Ascending aorta (tissue), 2 donors: ENCODE measurements at regions of chr7 and their contacts with region 1.

Region 1: GRCh38 chr7:46257766-46258448 is 336.8 kb upstream of the IGFBP3 start:
- DNase-seq: no peak
- H3K4me3 ChIP-seq: no peak overlapping the region
- H3K27ac ChIP-seq: no peak overlapping the region
- H3K4me1 ChIP-seq: no peaks in the 10 kb centered on the region
- H3K27me3 ChIP-seq: no peaks in the 10 kb centered on the region
- CTCF ChIP-seq: no peak

Region 2: DNA sequence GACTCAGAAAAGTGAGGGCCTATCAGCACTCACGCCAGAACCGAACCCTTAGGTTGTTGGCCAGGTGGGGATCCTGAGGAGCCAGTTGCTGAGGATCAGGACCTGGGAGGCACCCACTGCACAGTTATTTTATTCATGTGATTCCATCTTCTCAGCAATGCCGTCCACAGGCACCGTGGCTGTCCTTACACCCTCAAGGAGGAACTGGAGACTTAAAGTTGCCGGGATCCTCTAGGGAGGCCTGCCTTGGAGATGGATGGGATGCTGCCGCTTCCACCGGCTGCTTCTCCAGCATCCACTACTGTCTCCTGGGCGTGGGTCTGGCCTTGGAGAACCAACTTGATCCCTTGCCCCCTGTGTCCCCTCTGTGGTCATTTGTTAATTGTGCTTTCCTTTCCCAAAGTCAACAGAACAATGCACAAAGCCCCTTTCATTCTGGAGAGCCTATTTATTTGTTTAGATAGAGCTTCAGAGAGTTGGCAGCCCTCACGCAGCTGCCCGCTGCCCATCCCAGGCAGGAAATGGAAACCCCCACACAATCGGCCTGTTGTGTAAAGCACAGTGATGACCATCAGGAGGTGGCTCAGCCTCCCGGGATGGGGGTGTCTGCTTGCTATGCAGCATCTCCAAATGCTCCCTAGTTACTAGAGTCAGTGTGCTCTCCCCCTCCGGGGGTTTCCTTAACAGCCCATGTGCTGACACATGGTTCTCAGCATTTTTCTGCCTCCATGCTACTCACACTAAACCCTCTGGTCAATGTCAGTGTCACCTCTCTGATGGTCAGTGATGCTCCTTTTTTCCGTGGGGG is 284.0 kb before region 1 on chr7:
- intact Hi-C with region 1: no loop called
- DNase-seq: no peak
- H3K4me3 ChIP-seq: no peak overlapping the region
- H3K27ac ChIP-seq: peak overlapping the region in 1 of 2 donors; percentile 7
- H3K4me1 ChIP-seq: peaks cover 6 to 25% of the 10 kb centered on the region in 2 donors
- H3K27me3 ChIP-seq: no peaks in the 10 kb centered on the region
- CTCF ChIP-seq: no peak

Region 3: GRCh38 chr7:46178661-46179060 is 79.2 kb before region 1 on chr7:
- intact Hi-C with region 1: no loop called
- DNase-seq: no peak
- H3K4me3 ChIP-seq: no peak overlapping the region
- H3K27ac ChIP-seq: no peak overlapping the region
- H3K4me1 ChIP-seq: no peaks in the 10 kb centered on the region
- H3K27me3 ChIP-seq: no peaks in the 10 kb centered on the region
- CTCF ChIP-seq: no peak

Region 4: DNA sequence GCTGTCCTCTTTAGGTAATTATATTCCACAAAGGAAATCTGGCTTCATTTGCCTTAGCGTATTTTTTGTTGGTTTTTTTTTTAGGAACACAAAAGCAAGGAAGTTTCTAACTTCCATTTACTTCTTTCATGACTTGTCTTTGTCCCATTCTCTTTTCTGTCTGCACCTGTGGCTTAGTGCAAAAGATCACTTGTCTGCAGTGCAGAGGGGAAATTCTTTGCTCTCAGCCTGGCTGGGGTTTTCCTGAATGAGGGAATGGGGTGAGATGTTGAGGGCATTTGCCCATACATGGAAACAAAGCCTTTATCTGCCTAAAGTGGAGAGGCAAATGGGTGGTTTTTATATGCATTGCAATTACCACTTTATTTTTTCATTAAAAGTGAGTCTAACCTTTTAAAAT is 24.2 kb after region 1 on chr7:
- intact Hi-C with region 1: loop called (anchors 1 kb)
- DNase-seq: no peak
- H3K4me3 ChIP-seq: no peak overlapping the region
- H3K27ac ChIP-seq: no peak overlapping the region
- H3K4me1 ChIP-seq: no peaks in the 10 kb centered on the region
- H3K27me3 ChIP-seq: no peaks in the 10 kb centered on the region
- CTCF ChIP-seq: no peak

Region 5: GRCh38 chr7:46301677-46302076 is 43.8 kb after region 1 on chr7:
- intact Hi-C with region 1: no loop called
- DNase-seq: no peak
- H3K4me3 ChIP-seq: no peak overlapping the region
- H3K27ac ChIP-seq: no peak overlapping the region
- H3K4me1 ChIP-seq: no peaks in the 10 kb centered on the region
- H3K27me3 ChIP-seq: no peaks in the 10 kb centered on the region
- CTCF ChIP-seq: no peak